Prostate gland (tissue), 2 donors: ENCODE measurements at regions of chr17 and their contacts with region 1.

Region 1: DNA sequence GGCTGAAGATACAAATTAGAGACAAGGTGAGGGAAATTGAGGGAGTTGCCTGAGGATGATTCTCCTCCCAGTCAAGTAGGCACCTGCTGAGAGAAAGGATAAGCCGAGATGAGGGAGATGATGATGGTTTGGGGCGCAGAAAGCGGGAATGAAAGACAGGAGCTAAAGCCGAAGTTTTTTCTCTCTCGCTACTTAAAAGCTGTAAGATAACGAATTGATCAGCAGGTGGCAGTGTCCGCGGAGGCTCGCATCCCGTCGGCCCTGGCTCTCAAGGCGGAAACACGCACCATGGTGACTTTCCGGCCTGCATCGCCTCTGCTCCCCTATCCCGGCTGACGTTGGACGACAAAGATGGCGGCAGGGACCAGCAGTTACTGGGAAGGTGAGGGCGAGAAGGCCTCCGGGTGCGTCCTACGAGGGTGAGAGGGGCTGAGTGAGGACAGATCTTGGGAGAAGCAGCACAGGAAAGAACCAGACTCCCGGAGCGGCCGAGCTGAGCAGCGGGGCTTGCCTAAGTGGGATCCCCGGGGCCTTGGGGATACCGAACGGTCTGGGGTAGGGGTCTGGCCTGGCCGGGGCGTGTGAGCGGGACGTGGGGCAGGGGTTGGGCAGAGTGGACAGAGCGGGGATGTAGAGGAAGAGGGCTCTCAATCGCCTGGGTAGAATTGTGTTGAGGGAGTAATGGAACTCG is at the start of gene GOSR1:
- DNase-seq: peak; percentile 95
- H3K4me3 ChIP-seq: peak within 1 kb of the TSS; percentile 85 to 94
- H3K27ac ChIP-seq: peak within 1 kb of the TSS; percentile 83 to 93
- H3K4me1 ChIP-seq: no peaks in the 10 kb centered on the region
- H3K27me3 ChIP-seq: no peaks in the 10 kb centered on the region
- CTCF ChIP-seq: peak in 3 of 4 experiments; percentile 79 to 88 (median 83)
- POLR2A ChIP-seq: peak; percentile 58
- total RNA-seq, gene GOSR1: 39.5 to 48.9 TPM

Region 2: GRCh38 chr17:30309591-30309990 is 167.6 kb before region 1 on chr17:
- intact Hi-C with region 1: no loop called
- DNase-seq: no peak
- H3K4me3 ChIP-seq: no peak overlapping the region
- H3K27ac ChIP-seq: no peak overlapping the region
- H3K4me1 ChIP-seq: no peaks in the 10 kb centered on the region
- H3K27me3 ChIP-seq: no peaks in the 10 kb centered on the region
- CTCF ChIP-seq: no peak
- POLR2A ChIP-seq: no peak

Region 3: DNA sequence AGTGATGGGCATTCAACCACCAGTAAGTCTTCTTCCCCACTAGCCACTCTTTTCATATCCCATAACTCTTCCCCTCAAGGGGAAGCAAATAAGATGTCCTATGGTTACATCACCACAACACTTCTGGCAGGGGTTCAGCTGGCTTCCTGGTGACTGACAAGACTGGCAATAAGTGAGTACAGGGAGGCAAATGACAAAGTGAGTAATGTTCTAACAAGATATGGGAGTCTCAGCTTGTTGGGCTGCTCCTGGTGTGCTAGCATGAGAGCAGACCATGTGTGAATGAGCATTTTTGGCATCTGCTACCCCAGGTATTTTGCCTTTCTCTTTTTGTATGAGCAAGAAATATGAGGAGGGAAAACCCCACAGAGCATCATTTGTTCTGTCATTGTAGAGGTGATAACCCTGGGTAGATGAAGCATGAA is 153.3 kb before region 1 on chr17:
- intact Hi-C with region 1: no loop called
- DNase-seq: no peak
- H3K4me3 ChIP-seq: no peak overlapping the region
- H3K27ac ChIP-seq: no peak overlapping the region
- H3K4me1 ChIP-seq: no peaks in the 10 kb centered on the region
- H3K27me3 ChIP-seq: no peaks in the 10 kb centered on the region
- CTCF ChIP-seq: no peak
- POLR2A ChIP-seq: no peak

Region 4: GRCh38 chr17:30344283-30345088 is 132.7 kb before region 1 on chr17:
- intact Hi-C with region 1: loop called (anchors 10 kb)
- DNase-seq: peak; percentile 82
- H3K4me3 ChIP-seq: no peak overlapping the region
- H3K27ac ChIP-seq: peak overlapping the region; percentile 74 to 75
- H3K4me1 ChIP-seq: peaks cover 16% of the 10 kb centered on the region
- H3K27me3 ChIP-seq: no peaks in the 10 kb centered on the region
- CTCF ChIP-seq: no peak
- POLR2A ChIP-seq: no peak

Region 5: GRCh38 chr17:30600049-30600829 is 123.0 kb after region 1 on chr17:
- intact Hi-C with region 1: loop called (anchors 5 kb)
- DNase-seq: peak; percentile 78
- H3K4me3 ChIP-seq: peak overlapping the region; percentile 84 to 90
- H3K27ac ChIP-seq: peak overlapping the region; percentile 98 to 99
- H3K4me1 ChIP-seq: no peaks in the 10 kb centered on the region
- H3K27me3 ChIP-seq: no peaks in the 10 kb centered on the region
- CTCF ChIP-seq: peak in 3 of 4 experiments; percentile 15 to 67 (median 30)
- POLR2A ChIP-seq: peak; percentile 83

Region 6: DNA sequence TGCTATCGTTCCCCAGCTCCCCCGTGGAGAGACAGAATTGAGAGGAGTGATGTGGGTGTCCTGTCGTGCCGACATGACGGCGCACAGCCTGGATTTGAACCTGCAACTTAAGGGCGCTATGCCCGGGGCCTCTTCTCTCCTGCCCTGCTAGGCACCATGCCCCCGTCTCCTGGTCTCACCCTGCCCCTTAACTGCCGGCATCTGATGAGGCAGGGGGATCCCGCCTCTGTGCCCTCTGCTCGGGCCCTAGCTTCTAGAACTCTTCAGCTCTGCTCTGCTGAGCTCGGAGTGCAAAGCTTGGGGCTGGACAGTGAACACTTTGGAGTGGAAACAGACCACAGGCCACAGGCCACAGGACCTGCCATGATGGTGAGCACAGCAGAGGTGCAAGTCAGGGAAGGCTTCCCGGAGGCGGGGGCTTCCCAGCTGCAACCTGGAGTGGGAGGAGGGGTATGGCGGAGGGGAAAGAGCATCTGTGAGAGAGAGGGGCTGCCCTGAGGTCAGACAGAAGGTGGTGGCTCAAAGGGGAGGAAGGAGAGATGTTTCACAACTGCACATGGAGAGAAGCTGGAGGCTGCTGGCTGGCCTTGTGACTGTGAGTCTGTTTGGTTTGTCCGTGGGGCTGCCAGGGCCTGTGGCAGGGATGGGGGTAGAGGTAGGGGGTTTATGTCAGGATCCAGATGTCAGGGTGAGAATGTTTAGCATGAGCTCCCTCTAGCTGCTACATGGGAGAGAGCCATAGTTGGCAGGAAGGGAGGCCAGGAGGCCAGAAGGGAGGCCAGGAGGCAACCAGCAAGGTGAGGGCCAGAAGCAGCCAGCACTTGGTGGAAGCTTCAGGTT is 239.5 kb after region 1 on chr17:
- intact Hi-C with region 1: loop called (anchors 5 kb)
- DNase-seq: no peak
- H3K4me3 ChIP-seq: no peak overlapping the region
- H3K27ac ChIP-seq: no peak overlapping the region
- H3K4me1 ChIP-seq: no peaks in the 10 kb centered on the region
- H3K27me3 ChIP-seq: no peaks in the 10 kb centered on the region
- CTCF ChIP-seq: no peak
- POLR2A ChIP-seq: no peak

Region 7: GRCh38 chr17:30824356-30825145 is 347.3 kb after region 1 on chr17 and contains the start of gene CRLF3:
- intact Hi-C with region 1: loop called (anchors 10 kb)
- DNase-seq: peak; percentile 81
- H3K4me3 ChIP-seq: peak within 1 kb of the TSS; percentile 69 to 72
- H3K27ac ChIP-seq: peak within 1 kb of the TSS; percentile 71 to 73
- H3K4me1 ChIP-seq: peaks cover 6% of the 10 kb centered on the region
- H3K27me3 ChIP-seq: no peaks in the 10 kb centered on the region
- CTCF ChIP-seq: peak; percentile 18 to 76 (median 59)
- POLR2A ChIP-seq: peak; percentile 74
- total RNA-seq, gene CRLF3: 8.0 to 14.8 TPM